Activated CD8-positive, alpha-beta T cell treated with anti-CD3 and anti-CD28 coated beads, Interleukin-2, amount 10 ng/mL, durations not matched to agents 7 days and 5 days (primary cell): ENCODE measurements at regions of chr14 and their contacts with region 1.

Region 1: DNA sequence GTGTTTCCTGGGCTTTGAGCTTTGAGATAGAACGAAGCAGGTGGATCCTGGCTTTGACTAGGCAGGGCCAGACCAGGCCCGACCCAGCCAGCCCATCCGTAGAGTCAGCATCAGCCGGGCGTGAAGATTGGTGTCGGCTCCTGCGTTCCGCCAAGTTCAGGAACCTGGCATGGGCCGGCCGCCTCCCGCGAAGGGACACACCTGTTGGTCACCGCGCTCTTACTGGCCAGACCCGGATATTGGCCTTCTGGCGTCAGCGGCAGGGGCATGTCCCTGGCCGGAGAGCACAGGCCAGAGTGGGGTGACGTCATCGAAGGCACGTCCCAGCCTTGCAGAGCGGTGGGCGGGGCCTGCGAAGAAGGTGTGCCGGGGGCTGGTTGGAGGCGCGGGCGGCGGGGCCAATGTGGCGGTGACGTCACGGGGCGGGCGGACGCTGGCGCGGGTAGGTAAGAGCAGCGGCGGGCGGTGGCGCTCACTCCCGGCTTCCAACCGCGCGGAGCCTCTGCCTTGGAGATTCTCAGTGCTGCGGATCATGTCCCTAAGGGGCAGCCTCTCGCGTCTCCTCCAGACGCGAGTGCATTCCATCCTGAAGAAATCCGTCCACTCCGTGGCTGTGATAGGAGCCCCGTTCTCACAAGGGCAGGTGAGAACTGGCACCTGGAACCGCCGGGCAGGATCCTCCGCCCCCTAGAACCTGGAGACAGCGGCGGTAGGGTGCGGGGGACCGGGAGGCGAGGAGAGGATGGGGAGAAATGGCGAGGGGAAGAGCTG is at the start of gene ARG2:
- DNase-seq: peak; percentile 98
- ATAC-seq: peak; percentile 85
- H3K4me3 Mint-ChIP-seq: peak within 1 kb of the TSS; percentile 80
- H3K27ac Mint-ChIP-seq: peak within 1 kb of the TSS; percentile 83
- H3K4me1 Mint-ChIP-seq: peaks cover 34% of the 10 kb centered on the region
- H3K27me3 Mint-ChIP-seq: peaks cover 18% of the 10 kb centered on the region
- total RNA-seq, gene ARG2: 1.6 to 2.3 TPM

Region 2: GRCh38 chr14:67630186-67630585 is 10.6 kb after region 1 on chr14:
- CTCF ChIA-PET with region 1: interaction called, 12 read pairs
- POLR2A ChIA-PET with region 1: no interaction called
- DNase-seq: no peak
- ATAC-seq: no peak
- H3K4me3 Mint-ChIP-seq: no peak overlapping the region
- H3K27ac Mint-ChIP-seq: no peak overlapping the region
- H3K4me1 Mint-ChIP-seq: no peaks in the 10 kb centered on the region
- H3K27me3 Mint-ChIP-seq: no peaks in the 10 kb centered on the region

Region 3: DNA sequence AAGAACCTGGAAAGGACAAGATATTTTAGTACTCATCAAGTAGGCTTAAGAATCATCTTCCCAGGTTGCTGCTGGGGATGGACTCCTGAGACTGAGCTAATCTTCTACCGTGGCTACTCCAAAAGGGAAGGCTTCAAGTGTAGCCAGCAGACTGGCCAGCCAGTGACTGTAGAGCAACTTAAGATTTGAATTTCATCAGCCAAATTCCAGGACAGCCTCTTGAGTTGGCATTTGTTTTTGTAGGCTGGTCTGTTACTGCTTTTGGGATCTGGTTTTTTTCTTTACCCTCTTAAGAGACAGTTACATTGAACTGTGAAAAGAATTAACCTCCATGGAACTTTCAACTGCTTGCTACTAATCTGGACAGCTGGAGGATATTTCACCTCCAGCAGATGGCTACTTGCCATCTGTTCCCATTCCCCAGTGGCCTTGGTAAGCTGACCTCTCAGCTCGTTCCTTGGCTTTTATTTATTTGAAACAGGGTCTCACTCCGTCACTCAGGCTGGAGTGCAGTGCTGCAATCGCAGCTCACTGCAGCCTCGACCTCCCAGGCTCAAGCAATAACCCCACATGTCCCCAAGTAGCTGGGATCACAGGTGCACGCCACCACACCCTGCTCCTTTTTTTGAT is 34.1 kb after region 1 on chr14:
- CTCF ChIA-PET with region 1: interaction called, 11 read pairs
- POLR2A ChIA-PET with region 1: no interaction called
- DNase-seq: no peak
- ATAC-seq: no peak
- H3K4me3 Mint-ChIP-seq: no peak overlapping the region
- H3K27ac Mint-ChIP-seq: no peak overlapping the region
- H3K4me1 Mint-ChIP-seq: no peaks in the 10 kb centered on the region
- H3K27me3 Mint-ChIP-seq: no peaks in the 10 kb centered on the region

Region 4: DNA sequence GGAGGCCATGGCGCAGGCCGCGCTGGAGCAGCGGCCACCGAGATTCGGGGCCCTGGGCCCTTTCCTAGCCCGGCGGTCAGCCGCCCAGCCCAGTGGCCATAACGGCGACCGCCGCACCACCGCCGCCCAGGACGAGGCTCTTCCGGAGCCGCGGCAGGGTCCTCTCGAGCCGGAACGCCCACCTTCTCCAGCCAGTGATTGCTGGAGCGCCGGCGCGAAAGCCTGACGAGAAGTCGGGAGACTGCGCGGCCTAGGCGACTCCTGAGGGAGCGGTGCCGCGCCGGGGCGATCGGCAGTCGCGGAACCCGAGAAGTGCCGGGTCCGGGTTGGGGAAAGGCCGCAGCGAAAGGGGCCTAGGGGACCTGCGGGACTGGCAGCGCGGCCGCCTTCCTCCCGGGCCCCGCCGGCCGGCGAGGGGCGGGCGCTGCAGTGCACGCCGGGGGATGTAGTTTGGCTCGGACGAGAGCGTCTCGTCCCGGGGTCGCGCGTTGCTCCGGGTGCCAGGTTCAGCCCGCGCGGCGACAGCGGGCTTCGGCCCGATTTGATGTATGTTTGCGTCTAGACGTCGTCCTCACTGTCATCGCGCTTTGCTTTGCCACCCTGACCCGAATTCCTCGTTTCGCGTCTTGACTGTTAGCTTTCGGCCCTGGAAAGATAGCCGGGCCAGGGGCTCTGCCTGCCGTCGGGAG is 55.0 kb after region 1 on chr14 and contains the start of gene VTI1B:
- CTCF ChIA-PET with region 1: interaction called, 143 read pairs
- POLR2A ChIA-PET with region 1: interaction called, 3 read pairs
- DNase-seq: peak; percentile 76
- ATAC-seq: peak; percentile 94
- H3K4me3 Mint-ChIP-seq: peak within 1 kb of the TSS; percentile 83
- H3K27ac Mint-ChIP-seq: peak within 1 kb of the TSS; percentile 87
- H3K4me1 Mint-ChIP-seq: peaks cover 36% of the 10 kb centered on the region
- H3K27me3 Mint-ChIP-seq: no peaks in the 10 kb centered on the region
- total RNA-seq, gene VTI1B: 69.6 to 70.6 TPM

Region 5: DNA sequence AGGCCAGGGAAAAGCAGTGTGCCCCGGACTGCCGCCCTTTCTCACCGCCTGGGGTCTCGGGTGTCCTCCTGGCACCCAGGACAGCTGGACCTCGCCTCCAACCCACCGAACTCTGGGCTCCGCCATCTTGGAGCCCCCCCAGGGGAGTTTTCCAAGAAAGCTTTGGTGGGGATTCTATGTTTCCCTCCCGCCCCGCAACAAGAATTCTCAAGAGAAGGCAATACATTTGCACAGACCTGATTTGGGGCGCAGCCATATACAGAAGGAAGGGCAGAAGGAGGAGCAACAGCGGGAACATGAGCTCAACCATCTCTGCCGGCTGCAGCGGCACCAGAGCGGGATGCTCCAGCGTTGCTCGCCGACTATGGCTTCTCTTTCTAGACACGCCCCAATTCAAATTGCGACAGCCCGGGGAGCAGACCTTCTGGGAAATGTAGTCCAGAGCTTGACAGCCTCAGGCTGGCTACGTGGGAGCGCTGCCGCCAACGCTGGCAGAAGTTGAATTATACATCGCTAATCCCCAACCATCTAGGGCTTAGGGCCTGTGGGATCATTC is 75.8 kb after region 1 on chr14 and contains the start of gene RDH11:
- CTCF ChIA-PET with region 1: interaction called, 12 read pairs
- POLR2A ChIA-PET with region 1: interaction called, 5 read pairs
- DNase-seq: peak; percentile 91
- ATAC-seq: peak; percentile 90
- H3K4me3 Mint-ChIP-seq: peak within 1 kb of the TSS; percentile 88
- H3K27ac Mint-ChIP-seq: peak within 1 kb of the TSS; percentile 95
- H3K4me1 Mint-ChIP-seq: peaks cover 29% of the 10 kb centered on the region
- H3K27me3 Mint-ChIP-seq: no peaks in the 10 kb centered on the region
- total RNA-seq, gene RDH11: 48.8 to 57.1 TPM